Kidney (tissue), 22 donors: ENCODE measurements at regions of chr1 and their contacts with region 1.

Region 1: DNA sequence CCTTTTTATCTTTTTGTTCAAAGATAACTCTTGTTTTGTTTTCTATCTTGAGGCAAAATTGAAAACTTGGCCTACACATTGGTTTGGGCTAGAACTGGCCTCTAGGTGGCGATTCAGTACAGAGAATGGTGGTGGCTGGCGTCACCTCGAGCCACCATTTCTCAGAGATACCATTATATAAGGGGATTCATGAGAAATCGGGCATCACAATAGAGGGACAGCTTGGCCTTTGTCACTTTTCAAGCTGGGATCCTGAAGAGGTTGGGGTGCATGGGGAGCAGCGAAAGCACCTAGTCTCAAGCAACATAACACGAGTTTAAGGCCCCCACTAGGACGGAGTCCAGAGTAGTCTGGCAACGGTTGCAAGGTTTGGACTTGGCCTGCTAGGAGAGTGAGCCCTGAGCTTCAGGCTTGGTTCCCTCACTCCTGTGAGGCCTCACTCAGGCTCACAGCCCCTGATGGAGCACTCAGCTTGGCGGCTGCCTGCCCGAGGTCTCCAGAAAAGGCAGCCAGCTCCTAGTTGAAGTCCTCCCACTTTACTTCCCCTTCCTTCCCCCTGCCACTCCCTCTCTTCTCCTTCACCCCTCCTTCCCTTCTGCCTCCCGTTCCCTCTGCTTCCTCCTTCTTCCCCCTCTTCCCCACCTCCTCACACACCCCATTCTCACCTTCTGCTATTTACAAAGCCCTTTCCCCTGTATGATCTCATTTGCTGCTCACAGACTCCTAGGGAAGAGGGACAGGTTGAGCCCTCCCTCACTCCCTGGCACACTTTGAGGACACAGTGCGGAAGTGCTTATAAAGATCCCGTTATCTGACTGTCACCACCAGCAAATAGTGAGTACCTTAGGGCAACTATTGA is 67.8 kb downstream of the LRIG2 start:
- DNase-seq: peak; percentile 65 to 87 (median 76)
- H3K4me3 ChIP-seq: peak overlapping the region in 2 of 3 donors; percentile 52 to 58
- H3K27ac ChIP-seq: no peak overlapping the region
- H3K4me1 ChIP-seq: peaks cover 0 to 11% (median 6%) of the 10 kb centered on the region in 3 donors
- H3K27me3 ChIP-seq: no peaks in the 10 kb centered on the region
- CTCF ChIP-seq: peak; percentile 90

Region 2: GRCh38 chr1:113320972-113321690 is 180.3 kb after region 1 on chr1:
- intact Hi-C with region 1: no loop called
- DNase-seq: peak in 2 of 5 donors; percentile 22 to 27
- H3K4me3 ChIP-seq: no peak overlapping the region
- H3K27ac ChIP-seq: no peak overlapping the region
- H3K4me1 ChIP-seq: no peaks in the 10 kb centered on the region
- H3K27me3 ChIP-seq: no peaks in the 10 kb centered on the region
- CTCF ChIP-seq: no peak

Region 3: GRCh38 chr1:113442131-113442530 is 301.3 kb after region 1 on chr1:
- intact Hi-C with region 1: no loop called
- DNase-seq: no peak
- H3K4me3 ChIP-seq: no peak overlapping the region
- H3K27ac ChIP-seq: no peak overlapping the region
- H3K4me1 ChIP-seq: peaks cover 0 to 4% (median 0%) of the 10 kb centered on the region in 3 donors
- H3K27me3 ChIP-seq: no peaks in the 10 kb centered on the region
- CTCF ChIP-seq: no peak

Region 4: GRCh38 chr1:113493533-113493932 is 352.7 kb after region 1 on chr1:
- intact Hi-C with region 1: no loop called
- DNase-seq: no peak
- H3K4me3 ChIP-seq: no peak overlapping the region
- H3K27ac ChIP-seq: no peak overlapping the region
- H3K4me1 ChIP-seq: no peaks in the 10 kb centered on the region
- H3K27me3 ChIP-seq: no peaks in the 10 kb centered on the region
- CTCF ChIP-seq: no peak

Region 5: DNA sequence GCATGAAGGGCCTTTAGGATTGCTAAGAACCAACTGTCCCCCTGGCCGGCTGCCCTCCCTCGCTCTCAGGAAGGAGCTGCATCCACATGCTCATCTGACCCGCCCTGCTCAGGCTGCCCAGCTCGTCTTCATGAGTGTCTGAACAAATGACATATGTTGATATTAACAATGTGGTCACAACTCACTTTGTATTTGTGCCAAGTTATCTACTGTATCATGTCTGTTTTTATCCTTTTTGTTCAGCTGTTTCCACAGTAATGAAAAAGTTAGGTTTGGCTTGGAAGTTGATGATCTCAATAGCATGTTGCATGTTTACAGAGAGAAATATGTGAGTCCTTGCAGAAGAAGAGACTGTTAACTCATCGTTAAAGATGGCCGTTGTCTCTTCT is 543.3 kb after region 1 on chr1:
- intact Hi-C with region 1: loop called (anchors 10 kb)
- DNase-seq: peak in 2 of 5 donors; percentile 41 to 75
- H3K4me3 ChIP-seq: no peak overlapping the region
- H3K27ac ChIP-seq: no peak overlapping the region
- H3K4me1 ChIP-seq: no peaks in the 10 kb centered on the region
- H3K27me3 ChIP-seq: no peaks in the 10 kb centered on the region
- CTCF ChIP-seq: no peak